Mucosa of descending colon (tissue), 3 donors: ENCODE measurements at regions of chr5 and their contacts with region 1.

Region 1: GRCh38 chr5:77491783-77492652 is at the start of gene WDR41:
- DNase-seq: peak; percentile 93 to 96 (median 93)
- ATAC-seq: peak; percentile 98
- H3K4me3 ChIP-seq: peak within 1 kb of the TSS; percentile 65
- H3K4me1 ChIP-seq: peaks cover 7% of the 10 kb centered on the region
- CTCF ChIP-seq: peak; percentile 86
- total RNA-seq, gene WDR41: 15.8 to 33.1 (median 21.8) TPM

Region 2: DNA sequence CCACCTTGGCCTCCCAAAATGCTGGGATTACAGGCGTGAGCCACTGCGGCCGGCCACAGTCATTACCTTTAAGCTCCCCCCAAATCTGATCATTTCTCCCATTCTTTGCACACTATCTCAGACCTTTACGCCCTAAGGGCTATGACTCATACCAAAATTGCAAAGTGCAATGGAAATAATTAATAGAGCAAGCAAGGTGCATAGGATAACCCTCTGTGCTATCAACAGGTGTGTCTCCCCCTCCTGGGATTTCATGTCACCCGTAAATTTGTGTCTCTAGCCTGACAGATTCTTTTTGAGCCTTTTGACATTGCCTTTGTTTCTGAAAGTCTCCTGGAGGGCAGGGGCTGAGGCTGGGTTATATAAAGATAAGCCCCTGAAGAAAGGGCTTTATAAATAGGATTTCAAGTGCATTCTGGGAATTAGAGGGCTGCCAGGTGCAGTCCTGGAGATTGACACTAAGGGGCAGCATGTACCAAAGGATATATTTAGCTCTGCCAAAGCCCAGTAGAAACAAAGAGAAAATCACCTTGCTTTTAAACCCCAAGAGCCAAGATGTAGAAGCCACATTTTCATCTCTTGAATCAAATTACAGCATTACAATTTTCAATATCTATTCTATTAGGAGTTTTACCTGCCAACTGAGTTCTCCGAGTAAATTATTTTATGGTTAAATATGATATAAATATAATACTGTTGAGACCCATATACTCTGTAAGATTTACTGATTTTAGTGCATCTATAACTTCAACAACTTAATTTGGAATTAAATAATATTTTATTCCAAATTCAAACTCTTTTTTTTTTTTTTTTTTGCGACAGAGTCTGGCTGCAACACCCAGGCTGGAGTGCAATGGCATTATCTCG is 624.0 kb before region 1 on chr5:
- intact Hi-C with region 1: loop called in 1 of 2 experiments (anchors 10 kb)
- DNase-seq: peak in 2 of 3 donors; percentile 62 to 87
- ATAC-seq: peak; percentile 86
- H3K4me3 ChIP-seq: no peak overlapping the region
- H3K4me1 ChIP-seq: peaks cover 2% of the 10 kb centered on the region
- CTCF ChIP-seq: peak; percentile 65

Region 3: DNA sequence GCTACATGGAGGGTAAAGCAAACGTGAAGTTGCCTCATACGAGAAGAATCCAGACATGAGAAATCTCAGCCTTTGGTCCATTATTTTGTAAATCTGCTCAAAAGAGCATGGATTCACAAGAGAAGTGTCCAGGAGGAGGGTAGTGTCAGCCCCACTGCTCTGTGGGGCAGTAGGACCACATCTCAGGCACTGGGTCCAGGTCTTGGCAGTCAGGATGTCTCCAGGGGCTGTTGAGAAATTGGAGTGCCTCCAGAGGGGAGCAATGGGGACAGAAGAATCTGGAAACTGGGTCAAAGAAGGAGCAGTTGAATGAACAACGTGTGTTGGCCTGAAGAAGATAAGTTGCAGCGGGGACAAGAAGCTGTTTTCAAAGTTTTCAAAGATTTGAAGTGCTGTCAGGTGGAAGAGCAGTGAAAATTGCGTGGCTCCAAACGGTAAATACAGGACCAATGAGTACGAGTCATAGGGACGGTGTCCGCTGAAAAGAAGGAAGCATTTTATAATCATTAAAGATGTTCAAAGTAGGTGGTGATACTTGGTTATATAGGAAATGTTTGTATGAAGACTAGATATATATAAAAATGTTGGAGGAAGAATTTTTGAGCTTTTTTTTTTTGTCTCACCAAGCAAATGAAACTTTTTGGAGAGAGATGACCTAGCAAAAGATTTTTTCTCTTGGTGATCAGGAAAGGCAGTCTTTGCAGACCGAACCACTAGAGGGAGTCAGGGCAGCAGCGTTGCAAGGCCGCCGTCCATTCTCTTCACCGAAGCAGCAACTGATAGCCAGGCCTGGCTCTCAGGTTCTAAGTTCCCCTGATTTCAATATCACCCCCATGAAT is 347.8 kb before region 1 on chr5:
- intact Hi-C with region 1: loop called (anchors 5 to 10 kb)
- DNase-seq: peak; percentile 54 to 82 (median 56)
- ATAC-seq: peak; percentile 86
- H3K4me3 ChIP-seq: no peak overlapping the region
- H3K4me1 ChIP-seq: no peaks in the 10 kb centered on the region
- CTCF ChIP-seq: peak; percentile 76

Region 4: GRCh38 chr5:77697692-77698091 is 205.7 kb after region 1 on chr5:
- intact Hi-C with region 1: no loop called
- DNase-seq: no peak
- ATAC-seq: no peak
- H3K4me3 ChIP-seq: no peak overlapping the region
- H3K4me1 ChIP-seq: no peaks in the 10 kb centered on the region
- CTCF ChIP-seq: no peak